Dendritic cell treated with granulocyte-macrophage colony-stimulating factor and Interleukin-4, amounts not matched to agents 40 ng/mL and 50 ng/mL, for 4 days (primary cell): ENCODE measurements at regions of chr5 and their contacts with region 1.

Region 1: GRCh38 chr5:154072414-154073171 is 33.8 kb downstream of the MFAP3 start:
- H3K4me3 Mint-ChIP-seq: no peak overlapping the region
- H3K27ac Mint-ChIP-seq: no peak overlapping the region
- H3K4me1 Mint-ChIP-seq: peaks cover 6% of the 10 kb centered on the region
- H3K27me3 Mint-ChIP-seq: peaks cover 6% of the 10 kb centered on the region

Region 2: DNA sequence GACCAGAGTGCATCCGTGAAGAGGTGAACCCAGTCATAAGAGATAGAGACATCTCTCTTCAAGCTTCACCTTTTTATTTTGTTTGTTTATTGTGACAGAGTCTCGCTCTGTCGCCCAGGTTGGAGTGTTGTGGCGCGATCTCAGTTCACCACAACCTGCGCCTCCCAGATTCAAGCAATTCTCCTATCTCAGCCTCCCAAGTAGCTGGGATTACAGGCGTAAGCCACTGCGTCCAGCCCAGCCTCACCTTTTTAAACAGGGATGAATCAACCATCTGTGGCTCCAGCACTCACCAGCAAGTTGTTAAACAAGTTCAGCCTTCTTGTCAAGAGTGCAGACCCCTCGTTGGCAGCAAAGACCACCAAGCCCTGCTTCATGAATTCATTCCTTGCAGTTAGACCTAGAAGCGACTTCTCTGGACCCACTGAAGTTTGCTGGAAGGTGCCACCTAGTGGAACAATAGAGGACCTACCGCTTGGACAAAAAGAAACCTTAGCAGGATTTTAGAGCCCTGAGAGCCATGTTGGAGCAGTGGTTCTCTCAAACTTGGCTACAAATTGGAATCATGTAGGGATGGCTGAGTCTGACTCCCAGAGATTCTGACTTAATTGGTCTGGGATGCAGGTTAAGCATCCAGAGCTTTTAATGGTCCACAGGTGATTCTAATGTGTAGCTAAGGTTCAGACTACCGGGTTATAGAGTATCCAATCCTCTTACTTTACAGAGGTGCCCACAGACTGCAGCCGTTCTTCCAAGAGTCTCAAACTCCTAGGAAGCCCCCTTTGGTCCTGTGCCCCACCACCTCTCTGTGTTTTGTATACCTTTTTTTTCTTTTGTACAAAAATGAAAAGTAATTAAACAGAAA is 107.5 kb after region 1 on chr5:
- intact Hi-C with region 1: loop called (anchors 1 kb)
- H3K4me3 Mint-ChIP-seq: no peak overlapping the region
- H3K27ac Mint-ChIP-seq: no peak overlapping the region
- H3K4me1 Mint-ChIP-seq: no peaks in the 10 kb centered on the region
- H3K27me3 Mint-ChIP-seq: peaks cover 18% of the 10 kb centered on the region

Region 3: GRCh38 chr5:154228696-154229095 is 156.1 kb after region 1 on chr5:
- intact Hi-C with region 1: no loop called
- H3K4me3 Mint-ChIP-seq: peak overlapping the region; percentile 59
- H3K27ac Mint-ChIP-seq: peak overlapping the region; percentile 72
- H3K4me1 Mint-ChIP-seq: peaks cover 16% of the 10 kb centered on the region
- H3K27me3 Mint-ChIP-seq: no peaks in the 10 kb centered on the region

Region 4: DNA sequence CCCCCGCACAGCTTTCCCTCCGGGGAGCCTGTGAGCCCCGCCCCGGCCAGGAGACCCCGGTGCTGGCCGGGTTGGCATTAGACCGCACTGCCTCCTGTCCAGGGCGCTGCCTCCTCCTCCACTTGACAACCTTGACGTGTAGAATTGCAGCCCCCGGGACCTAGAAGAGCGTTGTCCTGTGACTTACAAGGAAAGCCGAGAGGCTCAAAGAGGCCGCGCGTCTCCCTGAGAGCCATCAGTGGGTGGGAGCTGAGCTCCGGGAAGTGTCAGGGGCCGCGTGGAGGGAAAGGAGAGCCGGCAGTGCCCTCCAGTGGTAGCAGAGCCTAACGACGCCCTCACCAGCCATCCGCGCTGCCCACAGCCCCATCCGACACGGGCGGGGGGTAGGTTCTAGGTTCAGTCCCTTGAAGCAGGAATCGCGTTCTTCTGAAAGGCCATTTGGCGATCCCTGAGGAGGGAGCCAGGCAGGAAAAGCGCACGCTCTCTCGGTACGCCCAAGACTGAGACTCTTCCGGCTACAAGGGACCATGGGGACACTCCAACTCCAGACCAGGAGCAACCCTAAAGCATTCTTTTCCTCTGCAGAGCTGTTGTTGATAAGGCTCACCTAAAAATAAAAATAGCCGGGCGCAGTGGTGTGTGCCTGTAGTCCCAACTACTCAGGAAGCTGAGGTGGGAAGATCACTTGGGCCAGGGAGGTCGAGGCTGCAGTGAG is 332.6 kb after region 1 on chr5:
- intact Hi-C with region 1: loop called (anchors 1 kb)
- H3K4me3 Mint-ChIP-seq: peak overlapping the region; percentile 64
- H3K27ac Mint-ChIP-seq: no peak overlapping the region
- H3K4me1 Mint-ChIP-seq: peaks cover 8% of the 10 kb centered on the region
- H3K27me3 Mint-ChIP-seq: peaks cover 5% of the 10 kb centered on the region

Region 5: DNA sequence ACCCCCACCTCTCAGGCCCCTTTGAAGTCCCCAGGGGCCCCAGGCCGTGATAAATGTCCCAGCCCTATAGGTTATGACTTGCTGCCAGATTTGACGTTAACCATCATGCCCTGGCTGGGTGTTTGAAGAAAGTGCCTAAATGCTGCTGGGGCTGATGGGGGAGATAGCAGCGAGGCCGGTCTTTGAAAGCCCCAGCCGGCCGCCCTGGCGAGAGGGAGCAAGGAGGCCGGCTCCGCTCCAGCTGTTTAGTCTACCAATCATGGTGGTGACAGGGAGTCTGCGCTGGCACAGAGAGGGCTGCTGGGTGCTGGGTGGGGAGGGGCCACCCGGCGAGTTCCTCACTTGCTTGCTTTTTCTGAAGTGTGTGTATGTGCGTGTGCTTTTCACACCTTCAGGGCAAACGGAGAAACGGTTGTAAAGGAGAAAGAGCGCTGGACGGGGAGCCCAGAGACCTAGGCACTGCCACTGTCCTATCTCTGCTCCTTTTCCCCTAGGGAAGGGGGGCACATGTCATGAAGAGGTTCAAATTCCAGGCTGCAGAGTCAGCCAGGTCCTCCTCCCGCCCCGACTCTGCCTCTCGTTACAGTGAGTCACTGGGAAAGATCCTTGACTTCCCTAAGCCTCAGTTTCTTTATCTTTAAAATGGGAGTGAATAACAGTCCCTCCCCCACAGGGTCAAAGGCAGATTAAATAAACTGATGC is 531.5 kb after region 1 on chr5:
- intact Hi-C with region 1: loop called (anchors 10 kb)
- H3K4me3 Mint-ChIP-seq: no peak overlapping the region
- H3K27ac Mint-ChIP-seq: no peak overlapping the region
- H3K4me1 Mint-ChIP-seq: peaks cover 8% of the 10 kb centered on the region
- H3K27me3 Mint-ChIP-seq: peaks cover 51% of the 10 kb centered on the region